ENCODE measurements at regions of chr14 and their contacts with region 1.

Region 1: DNA sequence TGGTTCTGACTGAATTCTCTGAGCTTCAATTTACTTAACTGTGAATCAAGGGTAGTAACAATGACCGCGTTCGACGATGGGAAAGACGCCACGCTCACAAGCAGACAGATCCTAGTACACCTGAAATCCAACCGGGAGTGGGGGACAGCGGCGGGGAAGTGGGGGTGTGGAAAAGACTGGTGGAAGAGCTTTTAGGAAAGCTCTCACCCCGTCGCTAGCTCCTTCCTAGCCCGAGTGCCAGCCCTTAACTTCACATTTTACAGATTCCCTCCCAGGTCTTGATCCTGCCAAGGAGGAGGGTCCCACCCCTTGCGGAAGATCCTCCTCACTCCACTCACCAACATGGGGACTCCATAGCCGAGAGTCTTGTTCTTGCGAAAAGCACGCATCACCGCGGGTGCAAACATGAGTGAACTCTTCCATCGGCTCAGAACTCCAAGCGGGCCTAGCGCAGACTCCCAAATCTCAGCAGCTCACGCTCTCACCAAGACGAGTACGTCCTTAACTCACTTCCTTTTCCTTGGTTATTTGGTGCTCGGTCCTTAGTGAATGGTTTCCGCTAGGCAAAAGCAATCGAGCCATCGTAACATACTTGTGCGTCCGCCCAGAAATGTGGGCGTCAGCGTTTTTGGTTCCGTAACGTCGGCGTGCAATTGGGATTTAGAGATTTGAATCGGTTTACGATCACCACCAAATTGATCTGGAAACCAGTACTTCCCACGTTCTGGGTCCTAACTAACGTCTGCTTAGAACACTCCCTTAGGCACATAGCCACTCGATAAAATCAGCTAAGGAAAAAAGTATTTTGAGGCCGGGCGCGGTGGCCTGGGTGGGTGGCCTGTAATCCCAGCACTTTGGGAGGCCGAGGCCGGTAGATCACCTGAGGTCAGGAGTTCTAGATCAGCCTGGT is at the start of gene COX16:
- DNase-seq: peak; percentile 76 to 88 (median 82)
- H3K4me3 ChIP-seq: peak within 1 kb of the TSS; percentile 70 to 95
- H3K4me3 Mint-ChIP-seq: peak within 1 kb of the TSS; percentile 96 to 100 (median 100)
- H3K27ac ChIP-seq: peak within 1 kb of the TSS; percentile 62
- H3K27ac Mint-ChIP-seq: peak within 1 kb of the TSS; percentile 84 to 98 (median 97)
- H3K4me1 ChIP-seq: peaks cover 40% of the 10 kb centered on the region
- H3K4me1 Mint-ChIP-seq: peaks cover 35 to 53% (median 45%) of the 10 kb centered on the region in 4 donors
- H3K27me3 ChIP-seq: no peaks in the 10 kb centered on the region
- H3K27me3 Mint-ChIP-seq: no peaks in the 10 kb centered on the region
- total RNA-seq, gene COX16: 24.5 to 26.2 TPM

Region 2: GRCh38 chr14:70289138-70289537 is 70.3 kb before region 1 on chr14:
- CTCF ChIA-PET with region 1: no interaction called
- POLR2A ChIA-PET with region 1: no interaction called
- intact Hi-C with region 1: loop called (anchors 1 kb)
- DNase-seq: peak in 4 of 5 donors; percentile 2 to 15 (median 6)
- H3K4me3 ChIP-seq: no peak overlapping the region
- H3K4me3 Mint-ChIP-seq: peak overlapping the region in 7 of 8 donors; percentile 26 to 74 (median 69)
- H3K27ac ChIP-seq: no peak overlapping the region
- H3K27ac Mint-ChIP-seq: no peak overlapping the region
- H3K4me1 ChIP-seq: no peaks in the 10 kb centered on the region
- H3K4me1 Mint-ChIP-seq: peaks cover 2 to 5% (median 4%) of the 10 kb centered on the region in 4 donors
- H3K27me3 ChIP-seq: no peaks in the 10 kb centered on the region
- H3K27me3 Mint-ChIP-seq: peaks cover 2 to 10% of the 10 kb centered on the region in 2 donors

Region 3: GRCh38 chr14:70416725-70417349 is 57.4 kb after region 1 on chr14 and contains the start of gene SYNJ2BP:
- CTCF ChIA-PET with region 1: no interaction called
- POLR2A ChIA-PET with region 1: interaction called, 16 read pairs
- intact Hi-C with region 1: no loop called
- DNase-seq: peak; percentile 46 to 59 (median 57)
- H3K4me3 ChIP-seq: peak within 1 kb of the TSS; percentile 81 to 87
- H3K4me3 Mint-ChIP-seq: peak within 1 kb of the TSS; percentile 90 to 99 (median 94)
- H3K27ac ChIP-seq: peak within 1 kb of the TSS; percentile 59
- H3K27ac Mint-ChIP-seq: peak within 1 kb of the TSS; percentile 84 to 97 (median 90)
- H3K4me1 ChIP-seq: peaks cover 30% of the 10 kb centered on the region
- H3K4me1 Mint-ChIP-seq: peaks cover 15 to 48% (median 31%) of the 10 kb centered on the region in 4 donors
- H3K27me3 ChIP-seq: no peaks in the 10 kb centered on the region
- H3K27me3 Mint-ChIP-seq: peaks cover 2 to 4% of the 10 kb centered on the region in 2 donors
- total RNA-seq, gene SYNJ2BP: 17.0 to 19.8 TPM

Region 4: GRCh38 chr14:70448633-70449340 is 89.4 kb after region 1 on chr14:
- CTCF ChIA-PET with region 1: no interaction called
- POLR2A ChIA-PET with region 1: no interaction called
- intact Hi-C with region 1: no loop called
- DNase-seq: no peak
- H3K4me3 ChIP-seq: no peak overlapping the region
- H3K4me3 Mint-ChIP-seq: no peak overlapping the region
- H3K27ac ChIP-seq: no peak overlapping the region
- H3K27ac Mint-ChIP-seq: no peak overlapping the region
- H3K4me1 ChIP-seq: no peaks in the 10 kb centered on the region
- H3K4me1 Mint-ChIP-seq: no peaks in the 10 kb centered on the region
- H3K27me3 ChIP-seq: no peaks in the 10 kb centered on the region
- H3K27me3 Mint-ChIP-seq: no peaks in the 10 kb centered on the region